ENCODE measurements at regions of chr6 and their contacts with region 1.

Region 1: DNA sequence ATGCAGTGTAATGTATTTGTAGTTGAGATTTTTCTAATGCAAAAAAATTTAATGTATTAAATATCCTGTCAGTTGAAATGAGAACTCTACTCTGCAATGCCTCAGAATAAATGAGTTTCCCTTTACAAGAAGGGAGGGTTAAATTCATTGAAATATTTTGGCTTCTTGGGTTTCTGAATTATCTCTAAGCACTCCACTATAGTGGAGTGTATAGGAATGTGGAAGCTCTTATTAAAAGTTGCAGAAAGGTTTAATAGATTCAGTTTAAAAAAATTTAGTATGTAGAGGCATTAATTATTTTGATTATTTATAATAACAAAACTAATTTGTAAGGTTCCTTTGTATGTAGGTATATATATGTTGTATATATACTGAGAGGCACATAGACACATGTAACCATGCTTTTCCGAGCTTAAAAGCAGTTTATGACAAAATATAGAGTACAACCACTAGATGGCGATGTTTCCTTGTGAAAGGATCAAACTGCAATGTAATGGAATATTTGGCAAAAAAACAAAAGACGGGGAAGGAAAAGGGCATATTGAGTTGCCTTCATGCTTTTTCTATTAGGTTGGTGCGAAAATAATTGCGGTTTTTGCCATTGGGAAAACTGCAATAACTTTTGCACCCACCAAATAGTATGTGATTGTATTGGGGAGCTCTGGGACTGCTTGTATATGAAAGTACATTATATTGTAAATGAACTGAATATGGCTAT is 144.2 kb downstream of the MYO6 start:
- DNase-seq: peak; percentile 60
- H3K4me3 ChIP-seq: no peak overlapping the region
- H3K27ac ChIP-seq: no peak overlapping the region
- H3K27me3 ChIP-seq: no peaks in the 10 kb centered on the region
- CTCF ChIP-seq: peak; percentile 71

Region 2: DNA sequence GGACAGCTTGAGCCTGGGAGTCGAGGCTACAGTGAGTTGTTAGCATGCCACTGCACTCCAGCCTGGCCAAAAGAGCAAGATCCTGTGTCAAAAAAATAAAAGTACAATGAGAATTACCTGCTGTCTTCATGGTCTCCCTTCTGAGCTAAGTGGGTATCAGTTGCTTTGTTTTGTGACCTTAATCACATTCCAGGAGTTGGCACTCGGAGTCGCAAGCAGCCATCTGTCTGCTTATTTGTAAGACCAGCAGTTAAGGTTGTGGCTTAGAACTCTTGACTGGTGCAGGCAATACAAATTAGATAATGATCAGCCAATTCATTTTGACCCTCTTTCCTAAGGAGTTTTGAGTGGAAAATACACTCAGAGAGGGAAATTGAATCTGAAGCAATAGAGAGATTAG is 30.2 kb before region 1 on chr6:
- CTCF ChIA-PET with region 1: interaction called, 15 read pairs
- POLR2A ChIA-PET with region 1: no interaction called
- DNase-seq: no peak
- H3K4me3 ChIP-seq: no peak overlapping the region
- H3K27ac ChIP-seq: no peak overlapping the region
- H3K27me3 ChIP-seq: no peaks in the 10 kb centered on the region
- CTCF ChIP-seq: no peak

Region 3: GRCh38 chr6:75882734-75883133 is 10.5 kb before region 1 on chr6:
- CTCF ChIA-PET with region 1: interaction called, 87 read pairs
- POLR2A ChIA-PET with region 1: no interaction called
- DNase-seq: peak; percentile 21
- H3K4me3 ChIP-seq: no peak overlapping the region
- H3K27ac ChIP-seq: no peak overlapping the region
- H3K27me3 ChIP-seq: no peaks in the 10 kb centered on the region
- CTCF ChIP-seq: no peak

Region 4: DNA sequence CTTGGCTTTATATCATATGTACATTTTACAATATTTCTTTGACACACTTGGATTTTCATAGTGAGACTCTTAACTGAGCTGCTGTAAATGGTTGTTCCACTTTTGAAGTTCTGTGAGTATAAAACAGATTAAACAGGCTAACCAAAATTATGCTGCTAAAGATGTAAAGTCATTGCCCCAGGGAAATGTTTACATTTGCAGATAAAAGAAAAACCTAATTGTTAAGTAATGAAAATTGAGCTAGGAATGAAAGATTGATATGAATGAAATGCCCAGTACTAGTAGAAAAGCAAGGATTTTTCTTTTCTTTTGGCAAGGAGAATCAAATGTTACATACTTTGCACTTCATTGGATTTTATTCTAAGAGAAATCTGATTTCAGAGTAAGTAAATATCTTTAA is 19.8 kb after region 1 on chr6:
- CTCF ChIA-PET with region 1: interaction called, 57 read pairs
- POLR2A ChIA-PET with region 1: no interaction called
- DNase-seq: no peak
- H3K4me3 ChIP-seq: no peak overlapping the region
- H3K27ac ChIP-seq: no peak overlapping the region
- H3K27me3 ChIP-seq: no peaks in the 10 kb centered on the region
- CTCF ChIP-seq: no peak

Region 5: GRCh38 chr6:75934643-75935472 is 41.6 kb after region 1 on chr6:
- CTCF ChIA-PET with region 1: interaction called, 42 read pairs
- POLR2A ChIA-PET with region 1: no interaction called
- DNase-seq: peak; percentile 55
- H3K4me3 ChIP-seq: peak overlapping the region; percentile 58
- H3K27ac ChIP-seq: no peak overlapping the region
- H3K27me3 ChIP-seq: peaks cover 10% of the 10 kb centered on the region
- CTCF ChIP-seq: peak; percentile 84

Region 6: DNA sequence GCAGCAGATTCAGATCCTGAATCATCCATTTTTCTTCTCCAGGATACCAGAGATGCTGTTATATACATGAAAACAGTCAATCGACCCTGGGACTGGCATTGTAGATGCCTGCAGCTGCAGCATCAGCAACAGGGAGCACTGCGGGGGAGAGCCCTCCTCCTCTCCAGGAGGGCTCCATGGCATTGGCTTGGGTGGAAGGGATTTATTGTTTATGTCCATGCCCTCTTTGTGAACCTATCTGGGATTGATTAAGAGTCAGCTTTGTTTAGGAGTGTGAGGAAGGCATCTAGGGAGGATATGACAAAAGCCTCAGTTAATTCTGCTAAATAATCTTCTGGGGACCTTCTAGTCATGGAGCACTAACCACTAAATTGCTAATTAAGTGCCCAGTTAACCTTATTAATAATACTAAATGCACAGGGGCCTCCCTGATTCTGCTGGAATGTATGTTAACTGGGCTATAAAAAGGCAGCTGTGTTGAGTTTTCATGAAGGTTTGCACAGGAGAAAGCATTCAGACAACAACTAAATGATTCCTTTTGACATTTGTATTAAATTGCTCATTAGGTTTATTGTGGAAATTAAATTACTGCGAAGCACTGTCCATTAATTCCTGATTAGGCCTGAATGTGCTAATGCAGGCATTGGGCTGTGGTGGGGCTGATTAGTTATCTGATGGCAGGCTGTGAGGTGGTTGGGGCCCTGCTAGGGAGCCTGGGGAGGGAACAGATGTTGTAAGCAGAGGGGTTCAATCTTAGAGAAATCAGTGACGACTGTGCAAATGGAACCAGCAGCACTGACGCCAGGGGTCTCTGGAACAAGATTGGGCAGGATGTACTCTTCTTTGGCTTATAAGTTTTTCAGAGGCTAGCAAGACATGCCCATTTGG is 121.7 kb after region 1 on chr6:
- CTCF ChIA-PET with region 1: no interaction called
- POLR2A ChIA-PET with region 1: no interaction called
- DNase-seq: no peak
- H3K4me3 ChIP-seq: no peak overlapping the region
- H3K27ac ChIP-seq: no peak overlapping the region
- H3K27me3 ChIP-seq: no peaks in the 10 kb centered on the region
- CTCF ChIP-seq: no peak

Region 7: DNA sequence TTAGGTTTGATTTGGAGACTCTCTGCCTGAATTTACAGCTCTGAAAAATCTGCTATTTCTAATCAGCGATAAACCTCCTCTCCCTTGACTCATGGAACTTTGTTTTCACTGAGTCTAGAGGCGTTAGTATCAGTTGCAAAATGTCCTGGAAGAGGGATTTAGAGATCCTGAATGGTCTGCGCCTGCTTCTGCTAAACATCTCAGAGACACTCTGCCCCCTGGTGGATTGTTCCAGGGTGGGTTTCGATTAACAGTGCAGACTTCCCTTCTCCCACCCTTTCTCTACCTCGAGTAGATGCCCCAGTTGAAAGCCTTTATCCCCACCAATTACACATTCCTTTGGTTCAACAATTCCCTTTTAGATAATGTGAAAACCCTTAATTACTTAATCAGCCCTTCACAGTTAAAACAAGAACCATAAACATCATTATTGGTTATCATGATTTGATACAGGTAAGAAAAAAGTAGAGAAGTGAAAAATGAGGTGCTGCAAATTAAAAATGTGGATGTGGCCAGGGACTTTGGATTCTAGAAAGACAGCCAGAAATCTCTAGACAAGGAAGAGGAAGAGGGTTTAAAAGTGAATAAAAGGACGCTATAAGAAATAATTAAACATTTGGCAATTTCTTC is 1564.6 kb after region 1 on chr6:
- CTCF ChIA-PET with region 1: interaction called, 27 read pairs
- POLR2A ChIA-PET with region 1: no interaction called
- DNase-seq: peak; percentile 90
- H3K4me3 ChIP-seq: no peak overlapping the region
- H3K27ac ChIP-seq: no peak overlapping the region
- H3K27me3 ChIP-seq: peaks cover 7% of the 10 kb centered on the region
- CTCF ChIP-seq: peak; percentile 85

Measured in AG04450 (cell line).